PC-3 (cell line): ENCODE measurements at regions of chr10 and their contacts with region 1.

Region 1: GRCh38 chr10:329361-330099 is 194.3 kb downstream of the ZMYND11 start:
- DNase-seq: peak; percentile 85
- ATAC-seq: peak; percentile 94
- H3K4me3 ChIP-seq: peak overlapping the region; percentile 47
- H3K27ac ChIP-seq: peak overlapping the region; percentile 91
- H3K4me1 ChIP-seq: peaks cover 17% of the 10 kb centered on the region
- H3K27me3 ChIP-seq: no peaks in the 10 kb centered on the region
- CTCF ChIP-seq: no peak

Region 2: GRCh38 chr10:266974-267425 is 62.5 kb before region 1 on chr10:
- CTCF ChIA-PET with region 1: no interaction called
- POLR2A ChIA-PET with region 1: interaction called, 13 read pairs
- intact Hi-C with region 1: no loop called
- DNase-seq: peak; percentile 45
- ATAC-seq: peak; percentile 54
- H3K4me3 ChIP-seq: no peak overlapping the region
- H3K27ac ChIP-seq: peak overlapping the region; percentile 29
- H3K4me1 ChIP-seq: peaks cover 9% of the 10 kb centered on the region; the same call in 1 of the 2 replicates
- H3K27me3 ChIP-seq: no peaks in the 10 kb centered on the region
- CTCF ChIP-seq: no peak

Region 3: GRCh38 chr10:351770-352334 is 22.3 kb after region 1 on chr10:
- CTCF ChIA-PET with region 1: no interaction called
- POLR2A ChIA-PET with region 1: interaction called, 10 read pairs
- intact Hi-C with region 1: no loop called
- DNase-seq: no peak
- ATAC-seq: no peak
- H3K4me3 ChIP-seq: no peak overlapping the region
- H3K27ac ChIP-seq: no peak overlapping the region
- H3K4me1 ChIP-seq: no peaks in the 10 kb centered on the region
- H3K27me3 ChIP-seq: no peaks in the 10 kb centered on the region
- CTCF ChIP-seq: no peak

Region 4: DNA sequence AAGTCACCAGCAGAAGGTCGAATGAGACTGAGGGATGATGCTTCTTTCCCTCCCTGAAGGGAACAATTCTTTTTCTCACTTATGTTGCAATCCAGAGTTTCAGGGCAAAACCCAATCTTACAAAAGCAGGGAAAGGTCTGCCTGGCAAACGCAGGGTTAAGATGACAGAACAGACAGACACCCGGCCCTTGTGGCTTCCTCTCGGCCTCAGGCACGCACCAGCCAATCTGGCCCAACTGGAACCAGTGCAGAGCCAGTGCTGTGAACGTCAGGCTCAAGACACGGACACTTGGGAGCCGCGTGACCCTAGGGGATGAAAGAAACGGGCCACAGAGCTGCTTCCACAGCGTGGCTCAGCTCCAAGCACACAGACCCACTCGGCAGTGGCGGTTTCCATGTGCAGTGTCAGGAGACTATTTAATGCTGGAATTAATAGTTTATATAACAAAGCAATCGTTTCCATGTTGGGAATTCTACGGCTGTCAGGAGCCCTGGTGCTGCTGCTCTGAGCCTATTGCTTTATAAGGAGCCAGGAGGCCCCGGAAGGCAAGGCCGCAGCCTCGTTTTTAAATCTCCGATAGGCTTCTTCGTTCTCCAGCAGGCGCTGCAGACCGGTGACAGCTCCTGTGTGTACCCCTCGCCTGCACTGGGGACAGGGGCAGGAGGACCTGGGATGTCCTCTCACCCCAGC is 161.5 kb after region 1 on chr10:
- CTCF ChIA-PET with region 1: no interaction called
- POLR2A ChIA-PET with region 1: no interaction called
- intact Hi-C with region 1: no loop called
- DNase-seq: no peak
- ATAC-seq: no peak
- H3K4me3 ChIP-seq: no peak overlapping the region
- H3K27ac ChIP-seq: no peak overlapping the region
- H3K4me1 ChIP-seq: no peaks in the 10 kb centered on the region
- H3K27me3 ChIP-seq: no peaks in the 10 kb centered on the region
- CTCF ChIP-seq: no peak